CD4-positive, alpha-beta memory T cell (primary cell): ENCODE measurements at regions of chr12 and their contacts with region 1.

Region 1: DNA sequence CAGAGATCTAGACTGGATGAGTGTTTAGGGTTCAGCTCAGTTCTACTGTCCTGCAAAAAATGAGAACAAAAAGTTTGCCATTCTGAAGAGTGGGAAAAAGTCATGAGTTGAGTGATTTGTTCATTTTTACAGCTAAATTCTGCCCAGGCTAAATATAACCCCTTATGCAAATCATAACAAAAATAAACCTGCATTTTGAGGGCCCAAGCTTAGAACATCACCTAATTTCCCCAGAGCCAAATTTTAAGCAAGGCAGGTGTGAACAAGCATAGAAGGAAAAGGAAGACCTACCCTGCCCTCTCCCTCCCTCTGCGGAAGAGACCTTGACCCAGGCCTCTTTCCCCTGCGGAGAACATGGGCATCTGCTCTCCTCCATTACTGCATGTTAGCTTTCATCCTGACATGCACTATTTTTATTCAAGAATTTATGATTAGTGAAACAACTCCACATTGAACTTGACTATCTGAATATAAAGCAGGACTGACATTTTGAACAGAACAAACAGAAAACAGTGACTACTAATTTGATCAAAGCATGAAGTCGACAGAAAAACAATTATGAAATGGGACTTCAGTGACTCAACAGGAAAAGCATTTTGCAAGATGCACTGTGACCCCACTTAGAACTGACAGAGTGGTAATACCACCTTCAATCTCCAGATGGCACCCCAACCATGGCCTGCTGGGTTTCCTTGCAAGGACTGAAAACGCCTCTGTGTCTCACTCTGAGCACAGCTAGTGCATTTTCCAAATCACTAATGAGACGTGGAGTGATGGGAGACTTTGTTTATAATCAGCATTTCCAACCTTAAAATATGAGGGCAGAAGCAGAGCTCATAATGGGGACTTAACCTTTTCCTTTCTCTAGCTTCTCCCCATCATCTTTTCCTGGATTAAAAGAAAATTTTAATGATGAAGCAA is 30.9 kb upstream of the SELPLG start:
- DNase-seq: peak; percentile 79 to 85 (median 81)
- H3K4me3 ChIP-seq: no peak overlapping the region
- H3K4me3 Mint-ChIP-seq: peak overlapping the region in 1 of 8 donors; percentile 20
- H3K27ac ChIP-seq: no peak overlapping the region
- H3K27ac Mint-ChIP-seq: peak overlapping the region; percentile 78 to 93 (median 86)
- H3K4me1 ChIP-seq: peaks cover 14% of the 10 kb centered on the region
- H3K4me1 Mint-ChIP-seq: peaks cover 9 to 10% (median 9%) of the 10 kb centered on the region in 4 donors
- H3K27me3 ChIP-seq: no peaks in the 10 kb centered on the region
- H3K27me3 Mint-ChIP-seq: no peaks in the 10 kb centered on the region

Region 2: DNA sequence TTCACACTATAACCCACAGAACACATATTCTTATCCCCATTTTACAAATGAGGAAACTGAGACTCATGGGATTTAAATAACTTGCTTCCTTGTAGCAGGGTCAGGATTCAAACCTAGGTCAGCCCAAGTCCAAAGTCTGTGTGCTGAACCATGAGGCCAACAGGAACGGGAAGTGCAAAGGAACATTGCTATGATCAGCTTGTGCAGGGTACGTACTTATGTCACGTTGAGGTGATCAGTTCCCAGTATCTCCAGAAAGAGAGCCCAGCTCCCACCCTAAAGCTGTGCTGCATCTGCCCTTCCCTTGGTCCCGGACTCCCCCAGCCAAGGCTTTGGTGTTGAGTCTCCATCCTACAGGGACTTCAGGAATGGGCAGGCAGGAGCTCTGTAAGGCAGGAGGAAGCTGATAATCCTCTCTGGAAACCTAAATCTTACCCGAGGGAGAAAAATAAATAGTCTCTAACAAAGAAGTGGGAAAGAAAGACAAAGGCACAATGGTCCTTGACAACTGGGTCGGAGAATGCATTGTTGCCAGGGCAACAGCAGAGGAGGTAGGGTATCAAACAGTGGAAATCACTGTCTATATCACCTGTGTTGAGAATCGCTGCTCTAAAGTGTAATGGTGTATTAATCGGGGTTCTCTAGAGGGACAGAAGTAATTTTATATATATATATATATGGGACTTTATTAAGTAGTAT is 232.0 kb before region 1 on chr12:
- CTCF ChIA-PET with region 1: no interaction called
- POLR2A ChIA-PET with region 1: no interaction called
- intact Hi-C with region 1: no loop called
- DNase-seq: no peak
- H3K4me3 ChIP-seq: no peak overlapping the region
- H3K4me3 Mint-ChIP-seq: no peak overlapping the region
- H3K27ac ChIP-seq: no peak overlapping the region
- H3K27ac Mint-ChIP-seq: no peak overlapping the region
- H3K4me1 ChIP-seq: no peaks in the 10 kb centered on the region
- H3K4me1 Mint-ChIP-seq: no peaks in the 10 kb centered on the region
- H3K27me3 ChIP-seq: no peaks in the 10 kb centered on the region
- H3K27me3 Mint-ChIP-seq: peaks cover 3 to 16% of the 10 kb centered on the region in 2 donors

Region 3: DNA sequence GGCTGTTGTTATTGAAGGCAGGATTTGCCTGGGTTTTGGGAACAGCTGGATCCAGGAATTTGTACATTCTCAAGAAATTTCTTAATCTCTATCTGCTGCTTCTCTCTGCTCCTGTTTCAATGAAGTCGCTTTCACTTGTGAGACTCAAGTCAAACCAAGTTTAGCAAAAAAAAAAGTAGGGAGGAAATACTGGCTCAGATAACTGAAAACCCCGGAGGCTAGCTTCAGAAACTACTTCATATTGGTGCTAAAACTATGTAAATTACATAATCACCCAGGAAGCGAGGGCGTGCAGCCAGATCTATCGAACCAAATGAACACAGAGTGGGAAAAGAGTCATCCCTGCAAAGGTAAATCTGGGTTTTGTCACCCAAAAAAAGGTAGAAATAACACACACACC is 217.8 kb before region 1 on chr12:
- CTCF ChIA-PET with region 1: no interaction called
- POLR2A ChIA-PET with region 1: no interaction called
- intact Hi-C with region 1: no loop called
- DNase-seq: no peak
- H3K4me3 ChIP-seq: no peak overlapping the region
- H3K4me3 Mint-ChIP-seq: no peak overlapping the region
- H3K27ac ChIP-seq: no peak overlapping the region
- H3K27ac Mint-ChIP-seq: no peak overlapping the region
- H3K4me1 ChIP-seq: no peaks in the 10 kb centered on the region
- H3K4me1 Mint-ChIP-seq: no peaks in the 10 kb centered on the region
- H3K27me3 ChIP-seq: no peaks in the 10 kb centered on the region
- H3K27me3 Mint-ChIP-seq: peaks cover 12 to 29% of the 10 kb centered on the region in 2 donors

Region 4: DNA sequence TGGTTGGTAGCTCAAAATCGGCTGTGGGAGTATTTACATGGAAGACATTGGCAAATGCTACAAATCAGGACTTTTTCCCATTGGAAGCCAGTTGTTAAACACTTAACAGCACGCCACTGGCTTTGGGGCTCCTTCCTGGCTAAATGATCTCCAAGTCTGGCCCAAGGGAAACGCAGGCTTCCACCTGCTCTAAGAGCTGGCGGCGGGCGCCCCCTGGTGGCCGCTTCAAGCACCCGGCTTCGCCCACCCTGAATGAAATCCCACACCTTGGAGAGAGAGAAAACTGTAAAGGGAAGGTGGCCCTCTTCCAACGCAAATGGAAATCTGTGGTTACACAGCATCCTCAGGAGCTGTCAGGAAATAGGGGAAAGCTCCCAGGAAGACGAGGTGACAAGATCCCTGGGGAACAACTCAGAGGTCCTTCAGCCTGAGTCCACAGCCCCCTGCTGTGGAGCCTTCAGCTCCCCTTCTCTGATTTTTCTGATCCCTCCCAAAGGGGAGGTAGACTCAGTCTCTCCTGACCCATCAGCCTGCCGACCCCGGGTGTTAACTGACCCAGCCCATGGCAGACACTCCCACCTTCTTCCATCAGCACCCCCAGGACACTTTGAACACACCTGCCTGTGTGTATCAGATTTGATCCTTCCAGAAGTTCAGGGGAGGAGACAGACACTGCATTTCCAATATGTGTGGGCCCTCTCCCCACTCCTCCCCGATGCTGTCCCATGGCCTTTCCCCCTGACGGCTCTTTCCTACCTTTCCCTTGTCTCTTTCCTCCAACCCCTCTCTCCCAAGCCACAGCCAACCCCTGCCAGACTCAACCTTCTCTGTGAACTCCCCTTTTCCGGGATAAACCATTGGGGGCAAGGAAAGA is 46.3 kb before region 1 on chr12:
- CTCF ChIA-PET with region 1: interaction called, 64 read pairs
- POLR2A ChIA-PET with region 1: interaction called, 9 read pairs
- intact Hi-C with region 1: loop called (anchors 2 kb)
- DNase-seq: peak; percentile 73 to 78 (median 76)
- H3K4me3 ChIP-seq: no peak overlapping the region
- H3K4me3 Mint-ChIP-seq: peak overlapping the region in 6 of 8 donors; percentile 19 to 59 (median 48)
- H3K27ac ChIP-seq: peak overlapping the region; percentile 78
- H3K27ac Mint-ChIP-seq: peak overlapping the region; percentile 87 to 99 (median 95)
- H3K4me1 ChIP-seq: peaks cover 64% of the 10 kb centered on the region
- H3K4me1 Mint-ChIP-seq: peaks cover 47 to 78% (median 62%) of the 10 kb centered on the region in 4 donors
- H3K27me3 ChIP-seq: no peaks in the 10 kb centered on the region
- H3K27me3 Mint-ChIP-seq: no peaks in the 10 kb centered on the region

Region 5: GRCh38 chr12:108643941-108644810 is 20.4 kb before region 1 on chr12:
- CTCF ChIA-PET with region 1: interaction called, 82 read pairs
- POLR2A ChIA-PET with region 1: interaction called, 5 read pairs
- intact Hi-C with region 1: no loop called
- DNase-seq: no peak
- H3K4me3 ChIP-seq: no peak overlapping the region
- H3K4me3 Mint-ChIP-seq: no peak overlapping the region
- H3K27ac ChIP-seq: no peak overlapping the region
- H3K27ac Mint-ChIP-seq: peak overlapping the region in 2 of 7 donors; percentile 32 to 46
- H3K4me1 ChIP-seq: peaks cover 14% of the 10 kb centered on the region
- H3K4me1 Mint-ChIP-seq: peaks cover 18 to 44% (median 25%) of the 10 kb centered on the region in 4 donors
- H3K27me3 ChIP-seq: no peaks in the 10 kb centered on the region
- H3K27me3 Mint-ChIP-seq: no peaks in the 10 kb centered on the region

Region 6: GRCh38 chr12:108678104-108678730 is 13.6 kb after region 1 on chr12:
- CTCF ChIA-PET with region 1: interaction called, 10 read pairs
- POLR2A ChIA-PET with region 1: no interaction called
- intact Hi-C with region 1: no loop called
- DNase-seq: no peak
- H3K4me3 ChIP-seq: no peak overlapping the region
- H3K4me3 Mint-ChIP-seq: no peak overlapping the region
- H3K27ac ChIP-seq: no peak overlapping the region
- H3K27ac Mint-ChIP-seq: no peak overlapping the region
- H3K4me1 ChIP-seq: no peaks in the 10 kb centered on the region
- H3K4me1 Mint-ChIP-seq: peaks cover 0 to 4% (median under 1%) of the 10 kb centered on the region in 4 donors
- H3K27me3 ChIP-seq: no peaks in the 10 kb centered on the region
- H3K27me3 Mint-ChIP-seq: no peaks in the 10 kb centered on the region

Region 7: GRCh38 chr12:108731105-108731865 is 66.7 kb after region 1 on chr12 and contains the start of gene CORO1C:
- CTCF ChIA-PET with region 1: interaction called, 13 read pairs
- POLR2A ChIA-PET with region 1: no interaction called
- intact Hi-C with region 1: loop called (anchors 1 kb)
- DNase-seq: peak; percentile 94 to 97 (median 95)
- H3K4me3 ChIP-seq: peak within 1 kb of the TSS; percentile 88 to 91
- H3K4me3 Mint-ChIP-seq: peak within 1 kb of the TSS; percentile 89 to 97 (median 95)
- H3K27ac ChIP-seq: peak within 1 kb of the TSS; percentile 69
- H3K27ac Mint-ChIP-seq: peak within 1 kb of the TSS; percentile 92 to 99 (median 98)
- H3K4me1 ChIP-seq: peaks cover 5% of the 10 kb centered on the region
- H3K4me1 Mint-ChIP-seq: peaks cover 11 to 28% (median 26%) of the 10 kb centered on the region in 4 donors
- H3K27me3 ChIP-seq: no peaks in the 10 kb centered on the region
- H3K27me3 Mint-ChIP-seq: no peaks in the 10 kb centered on the region
- total RNA-seq, gene CORO1C: 10.3 to 11.9 TPM

Region 8: GRCh38 chr12:108980831-108981618 is 316.4 kb after region 1 on chr12:
- CTCF ChIA-PET with region 1: no interaction called
- POLR2A ChIA-PET with region 1: no interaction called
- intact Hi-C with region 1: no loop called
- DNase-seq: no peak
- H3K4me3 ChIP-seq: no peak overlapping the region
- H3K4me3 Mint-ChIP-seq: no peak overlapping the region
- H3K27ac ChIP-seq: no peak overlapping the region
- H3K27ac Mint-ChIP-seq: no peak overlapping the region
- H3K4me1 ChIP-seq: no peaks in the 10 kb centered on the region
- H3K4me1 Mint-ChIP-seq: no peaks in the 10 kb centered on the region
- H3K27me3 ChIP-seq: no peaks in the 10 kb centered on the region
- H3K27me3 Mint-ChIP-seq: peaks cover 2 to 3% of the 10 kb centered on the region in 2 donors

Region 9: GRCh38 chr12:109093022-109093918 is 428.7 kb after region 1 on chr12 and contains the start of gene ALKBH2:
- CTCF ChIA-PET with region 1: interaction called, 15 read pairs
- POLR2A ChIA-PET with region 1: no interaction called
- intact Hi-C with region 1: loop called (anchors 1 kb)
- DNase-seq: peak; percentile 93 to 98 (median 95)
- H3K4me3 ChIP-seq: peak within 1 kb of the TSS; percentile 62 to 75
- H3K4me3 Mint-ChIP-seq: peak within 1 kb of the TSS; percentile 84 to 91 (median 86)
- H3K27ac ChIP-seq: peak within 1 kb of the TSS; percentile 60
- H3K27ac Mint-ChIP-seq: peak within 1 kb of the TSS; percentile 86 to 97 (median 95)
- H3K4me1 ChIP-seq: peaks cover 27% of the 10 kb centered on the region
- H3K4me1 Mint-ChIP-seq: peaks cover 21 to 56% (median 34%) of the 10 kb centered on the region in 4 donors
- H3K27me3 ChIP-seq: no peaks in the 10 kb centered on the region
- H3K27me3 Mint-ChIP-seq: no peaks in the 10 kb centered on the region
- total RNA-seq, gene ALKBH2: 12.9 to 14.4 TPM